ENCODE measurements at regions of chr2 and their contacts with region 1.

Region 1: DNA sequence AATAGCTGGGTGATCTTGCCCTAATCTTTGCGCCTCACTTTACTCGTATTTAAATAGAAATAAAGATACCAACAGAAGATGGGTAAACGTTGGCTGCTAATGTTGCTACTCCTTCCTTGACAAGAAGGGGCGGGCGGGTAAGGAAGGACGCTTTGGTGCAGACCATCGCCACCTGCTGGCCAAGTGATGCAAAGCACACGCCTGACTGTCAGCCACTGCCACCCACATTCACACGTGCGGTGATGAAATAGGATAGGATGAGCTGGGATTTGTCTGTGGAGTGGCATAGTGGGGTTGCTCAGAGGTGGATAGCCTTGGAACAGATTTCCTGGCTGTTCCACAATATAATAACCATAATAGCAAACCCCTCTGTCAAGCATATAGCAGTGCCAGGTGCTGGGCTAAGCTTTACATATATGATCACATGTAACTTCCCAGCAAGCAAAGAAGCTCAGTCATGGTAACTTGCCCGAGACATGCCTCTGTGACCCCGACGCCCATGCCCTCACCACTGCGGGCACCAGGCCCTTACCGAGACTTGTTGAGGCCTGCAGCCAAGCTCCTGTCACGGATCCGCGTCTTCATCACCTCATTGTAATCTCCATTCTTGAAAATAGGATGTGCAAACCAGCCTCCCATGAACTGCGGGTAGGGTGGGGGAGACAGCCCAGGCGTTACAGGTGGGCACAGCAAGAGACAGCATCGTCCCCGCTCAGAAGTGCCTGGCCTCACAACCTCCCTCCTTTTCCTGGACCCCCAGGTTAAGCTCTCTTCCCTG is 39.3 kb downstream of the LCT start:
- DNase-seq: peak; percentile 92
- ATAC-seq: peak; percentile 86
- H3K4me3 Mint-ChIP-seq: no peak overlapping the region
- H3K27ac Mint-ChIP-seq: no peak overlapping the region
- H3K4me1 Mint-ChIP-seq: peaks cover 21% of the 10 kb centered on the region
- H3K27me3 Mint-ChIP-seq: no peaks in the 10 kb centered on the region

Region 2: DNA sequence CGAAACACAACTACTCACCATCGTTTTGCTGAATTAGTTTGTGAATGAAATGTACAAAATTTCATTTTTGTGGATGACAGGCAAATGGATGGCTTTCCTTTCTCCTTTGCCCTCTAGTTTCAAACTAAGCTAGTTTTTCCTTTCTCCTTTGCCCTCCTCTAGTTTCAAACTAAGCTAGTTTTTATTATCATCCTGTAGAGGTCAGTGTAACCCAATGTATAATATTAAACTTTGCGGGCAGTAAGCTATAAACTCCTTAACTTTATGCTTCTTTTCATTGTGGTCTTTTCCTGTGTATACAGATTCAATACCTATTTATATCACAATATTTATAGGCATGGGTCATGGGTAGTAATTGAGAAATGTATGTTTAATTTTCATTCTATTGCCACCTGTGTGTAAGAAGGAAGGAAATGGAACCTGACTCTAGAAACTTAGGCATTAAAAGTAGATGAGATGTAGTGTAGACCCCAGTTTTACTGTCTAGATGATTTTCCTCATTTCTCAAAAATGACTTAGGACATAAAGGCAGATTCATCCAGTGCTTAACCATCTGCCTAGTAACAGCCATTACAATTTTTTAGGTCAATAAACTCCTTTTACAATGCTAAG is 808.6 kb before region 1 on chr2:
- CTCF ChIA-PET with region 1: interaction called, 12 read pairs
- POLR2A ChIA-PET with region 1: no interaction called
- intact Hi-C with region 1: loop called in 1 of 2 experiments (anchors 5 kb)
- DNase-seq: no peak
- ATAC-seq: no peak
- H3K4me3 Mint-ChIP-seq: no peak overlapping the region
- H3K27ac Mint-ChIP-seq: no peak overlapping the region
- H3K4me1 Mint-ChIP-seq: no peaks in the 10 kb centered on the region
- H3K27me3 Mint-ChIP-seq: peaks cover 2% of the 10 kb centered on the region

Region 3: DNA sequence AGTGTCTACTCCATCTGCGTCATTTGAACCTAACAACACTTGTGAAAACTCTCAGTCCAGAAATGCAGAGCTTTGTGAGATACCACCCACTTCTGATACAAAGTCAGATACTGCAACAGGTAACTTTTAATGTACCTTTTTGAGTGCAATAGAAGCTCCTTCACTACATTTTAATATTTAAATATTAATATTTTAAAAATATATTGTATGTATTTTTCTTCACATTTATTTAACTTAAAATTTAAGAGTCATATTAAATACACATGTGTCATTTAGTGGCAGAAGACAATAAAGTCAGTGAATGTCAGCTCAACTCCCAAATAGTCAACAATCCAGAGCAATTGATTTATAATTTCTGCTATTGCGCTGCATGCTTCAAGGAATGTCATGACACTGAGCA is 42.1 kb before region 1 on chr2:
- CTCF ChIA-PET with region 1: interaction called, 10 read pairs
- POLR2A ChIA-PET with region 1: no interaction called
- intact Hi-C with region 1: no loop called
- DNase-seq: no peak
- ATAC-seq: no peak
- H3K4me3 Mint-ChIP-seq: no peak overlapping the region
- H3K27ac Mint-ChIP-seq: no peak overlapping the region
- H3K4me1 Mint-ChIP-seq: peaks cover 6% of the 10 kb centered on the region
- H3K27me3 Mint-ChIP-seq: no peaks in the 10 kb centered on the region

Region 4: DNA sequence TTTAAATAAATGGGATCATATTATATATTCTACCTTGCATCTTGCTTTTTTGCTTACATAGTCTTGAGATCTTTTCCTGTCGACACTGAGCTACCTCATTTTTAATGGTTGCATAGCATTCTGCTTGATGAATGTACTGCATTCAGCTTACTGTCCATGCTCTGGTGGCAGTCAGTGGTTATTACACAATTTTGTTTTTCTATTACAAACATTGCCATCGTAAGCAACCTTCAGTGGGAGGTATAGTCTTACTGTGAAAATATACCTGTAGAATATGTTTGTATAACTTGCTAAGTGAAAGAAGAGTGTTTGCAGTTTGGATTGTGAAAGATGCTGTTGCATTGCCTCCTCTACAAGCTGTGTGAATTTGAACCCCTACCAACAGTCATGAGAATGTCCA is 12.7 kb before region 1 on chr2:
- CTCF ChIA-PET with region 1: interaction called, 60 read pairs
- POLR2A ChIA-PET with region 1: no interaction called
- intact Hi-C with region 1: no loop called
- DNase-seq: no peak
- ATAC-seq: peak; percentile 30
- H3K4me3 Mint-ChIP-seq: no peak overlapping the region
- H3K27ac Mint-ChIP-seq: no peak overlapping the region
- H3K4me1 Mint-ChIP-seq: no peaks in the 10 kb centered on the region
- H3K27me3 Mint-ChIP-seq: no peaks in the 10 kb centered on the region

Region 5: GRCh38 chr2:135812907-135813502 is 15.3 kb after region 1 on chr2:
- CTCF ChIA-PET with region 1: interaction called, 35 read pairs
- POLR2A ChIA-PET with region 1: interaction called, 4 read pairs
- intact Hi-C with region 1: no loop called
- DNase-seq: no peak
- ATAC-seq: no peak
- H3K4me3 Mint-ChIP-seq: no peak overlapping the region
- H3K27ac Mint-ChIP-seq: no peak overlapping the region
- H3K4me1 Mint-ChIP-seq: peaks cover 25% of the 10 kb centered on the region
- H3K27me3 Mint-ChIP-seq: no peaks in the 10 kb centered on the region

Region 6: DNA sequence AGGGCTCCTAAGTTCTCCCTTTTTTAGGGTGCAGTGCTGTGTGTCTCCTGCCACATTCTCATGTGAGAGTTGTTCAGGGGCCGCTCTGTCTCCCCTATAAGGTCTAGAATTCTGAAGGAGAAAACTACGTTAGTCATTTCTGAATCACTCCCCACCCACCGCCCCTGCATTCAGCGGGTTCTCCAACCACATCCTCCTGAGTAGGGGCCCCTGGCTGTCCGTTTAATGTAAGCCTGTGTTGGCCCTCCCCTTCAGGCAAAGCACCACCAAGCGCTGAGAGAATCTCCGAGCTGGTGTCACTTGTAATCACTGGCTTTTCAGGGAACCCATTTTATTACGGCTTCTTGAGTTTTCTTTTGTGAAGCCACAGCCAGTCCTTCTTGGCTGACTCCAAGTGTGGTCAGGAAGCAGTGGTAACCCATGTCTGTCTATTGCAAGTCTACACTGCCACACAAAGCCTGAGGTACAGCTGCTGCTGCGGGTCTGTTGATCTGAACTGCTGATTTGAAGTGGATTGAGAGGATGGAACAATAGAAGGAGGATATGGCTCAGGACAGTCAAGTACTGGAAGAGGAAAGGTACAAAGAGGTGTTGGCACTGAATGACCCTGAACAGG is 22.4 kb after region 1 on chr2:
- CTCF ChIA-PET with region 1: interaction called, 35 read pairs
- POLR2A ChIA-PET with region 1: interaction called, 3 read pairs
- intact Hi-C with region 1: no loop called
- DNase-seq: peak; percentile 94
- ATAC-seq: peak; percentile 93
- H3K4me3 Mint-ChIP-seq: peak overlapping the region; percentile 71
- H3K27ac Mint-ChIP-seq: peak overlapping the region; percentile 87
- H3K4me1 Mint-ChIP-seq: peaks cover 45% of the 10 kb centered on the region
- H3K27me3 Mint-ChIP-seq: no peaks in the 10 kb centered on the region